Activated CD8-positive, alpha-beta memory T cell treated with anti-CD3 and anti-CD28 coated beads, Interleukin-2, amount 10 ng/mL, durations not matched to agents 7 days and 5 days (primary cell): ENCODE measurements at regions of chr17 and their contacts with region 1.

Region 1: GRCh38 chr17:75749545-75750389 is 15.2 kb downstream of the GALK1 start:
- DNase-seq: peak; percentile 89
- ATAC-seq: peak; percentile 73
- H3K4me3 Mint-ChIP-seq: no peak overlapping the region
- H3K27ac Mint-ChIP-seq: no peak overlapping the region
- H3K4me1 Mint-ChIP-seq: peaks cover 18% of the 10 kb centered on the region
- H3K27me3 Mint-ChIP-seq: peaks cover 6% of the 10 kb centered on the region

Region 2: DNA sequence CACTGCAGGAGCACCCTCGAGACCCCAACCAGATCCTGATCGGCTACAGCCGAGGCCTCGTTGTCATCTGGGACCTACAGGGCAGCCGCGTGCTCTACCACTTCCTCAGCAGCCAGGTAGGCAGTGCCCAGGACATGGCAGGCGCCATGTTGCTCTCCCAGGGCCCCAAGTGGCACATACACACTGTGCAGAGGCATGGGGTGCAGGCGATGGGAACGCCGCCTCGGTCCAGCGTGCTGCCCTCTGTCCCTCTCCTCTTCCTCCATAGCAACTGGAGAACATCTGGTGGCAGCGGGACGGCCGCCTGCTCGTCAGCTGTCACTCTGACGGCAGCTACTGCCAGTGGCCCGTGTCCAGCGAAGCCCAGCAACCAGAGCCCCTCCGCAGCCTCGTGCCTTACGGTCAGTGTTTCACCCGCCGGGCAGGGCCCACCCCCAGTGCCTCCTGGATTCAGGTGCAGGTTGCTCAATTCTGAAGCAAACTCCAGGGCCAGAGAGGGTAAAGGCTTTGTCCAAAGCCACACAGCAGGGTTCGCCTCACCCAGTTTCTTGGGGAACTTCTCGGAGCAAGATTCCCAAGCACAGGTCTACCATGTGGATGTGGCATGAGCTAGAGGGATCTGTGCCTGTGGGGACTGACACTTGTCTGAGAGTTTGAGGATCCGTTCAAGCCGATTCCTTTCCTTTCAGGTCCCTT is 186.6 kb before region 1 on chr17:
- CTCF ChIA-PET with region 1: no interaction called
- DNase-seq: no peak
- ATAC-seq: no peak
- H3K4me3 Mint-ChIP-seq: no peak overlapping the region
- H3K27ac Mint-ChIP-seq: no peak overlapping the region
- H3K4me1 Mint-ChIP-seq: no peaks in the 10 kb centered on the region
- H3K27me3 Mint-ChIP-seq: no peaks in the 10 kb centered on the region

Region 3: DNA sequence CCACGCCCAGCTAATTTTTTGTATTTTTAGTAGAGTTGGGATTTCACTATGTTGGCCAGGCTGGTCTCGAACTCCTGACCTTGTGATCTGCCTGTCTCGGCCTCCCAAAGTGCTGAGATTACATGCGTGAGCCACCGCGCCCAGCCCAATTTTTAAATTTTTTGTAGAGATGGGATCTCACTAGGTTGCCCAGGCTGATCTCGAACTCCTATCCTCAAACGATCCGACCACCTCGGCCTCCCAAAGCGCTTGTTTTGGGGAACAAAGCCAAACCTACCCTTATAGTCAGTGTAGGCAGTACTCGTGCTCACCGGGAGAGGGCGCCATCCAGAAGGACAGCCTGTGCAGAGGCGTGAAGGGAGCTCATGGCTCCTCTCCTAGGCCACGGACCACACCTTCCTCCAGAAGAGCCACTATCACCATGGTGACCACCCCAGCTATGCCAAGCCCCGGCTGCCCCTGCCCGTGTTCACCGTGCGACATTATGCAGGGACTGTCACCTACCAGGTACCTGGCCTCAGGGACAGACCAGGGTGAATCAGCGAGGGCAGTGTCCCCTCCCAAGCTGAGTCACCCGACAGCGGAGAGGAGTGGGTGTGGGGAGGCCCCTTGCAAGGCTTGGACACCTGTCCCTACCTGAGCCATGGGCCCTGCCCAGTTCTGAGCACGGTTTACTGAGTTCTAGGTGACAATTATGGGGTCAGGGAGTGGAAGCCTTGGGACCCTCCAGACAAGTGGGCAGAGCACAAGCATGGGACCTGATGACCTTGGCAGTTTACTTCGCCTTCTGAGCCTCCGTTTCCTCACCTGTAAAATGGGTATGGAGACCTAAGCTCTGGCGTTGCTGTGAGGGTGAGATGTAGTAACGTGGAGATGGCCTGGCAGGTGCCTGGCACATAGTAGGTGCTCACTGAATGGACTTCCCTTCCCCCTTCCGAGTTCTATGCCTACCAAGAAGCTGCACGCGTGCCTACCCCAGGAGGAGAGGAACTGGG is 148.4 kb before region 1 on chr17:
- CTCF ChIA-PET with region 1: interaction called, 73 read pairs
- DNase-seq: peak; percentile 79
- ATAC-seq: peak; percentile 83
- H3K4me3 Mint-ChIP-seq: no peak overlapping the region
- H3K27ac Mint-ChIP-seq: no peak overlapping the region
- H3K4me1 Mint-ChIP-seq: no peaks in the 10 kb centered on the region
- H3K27me3 Mint-ChIP-seq: no peaks in the 10 kb centered on the region

Region 4: GRCh38 chr17:75645889-75646637 is 103.7 kb before region 1 on chr17:
- CTCF ChIA-PET with region 1: interaction called, 22 read pairs
- DNase-seq: peak; percentile 57
- ATAC-seq: peak; percentile 92
- H3K4me3 Mint-ChIP-seq: no peak overlapping the region
- H3K27ac Mint-ChIP-seq: peak overlapping the region; percentile 86
- H3K4me1 Mint-ChIP-seq: peaks cover 21% of the 10 kb centered on the region
- H3K27me3 Mint-ChIP-seq: no peaks in the 10 kb centered on the region

Region 5: DNA sequence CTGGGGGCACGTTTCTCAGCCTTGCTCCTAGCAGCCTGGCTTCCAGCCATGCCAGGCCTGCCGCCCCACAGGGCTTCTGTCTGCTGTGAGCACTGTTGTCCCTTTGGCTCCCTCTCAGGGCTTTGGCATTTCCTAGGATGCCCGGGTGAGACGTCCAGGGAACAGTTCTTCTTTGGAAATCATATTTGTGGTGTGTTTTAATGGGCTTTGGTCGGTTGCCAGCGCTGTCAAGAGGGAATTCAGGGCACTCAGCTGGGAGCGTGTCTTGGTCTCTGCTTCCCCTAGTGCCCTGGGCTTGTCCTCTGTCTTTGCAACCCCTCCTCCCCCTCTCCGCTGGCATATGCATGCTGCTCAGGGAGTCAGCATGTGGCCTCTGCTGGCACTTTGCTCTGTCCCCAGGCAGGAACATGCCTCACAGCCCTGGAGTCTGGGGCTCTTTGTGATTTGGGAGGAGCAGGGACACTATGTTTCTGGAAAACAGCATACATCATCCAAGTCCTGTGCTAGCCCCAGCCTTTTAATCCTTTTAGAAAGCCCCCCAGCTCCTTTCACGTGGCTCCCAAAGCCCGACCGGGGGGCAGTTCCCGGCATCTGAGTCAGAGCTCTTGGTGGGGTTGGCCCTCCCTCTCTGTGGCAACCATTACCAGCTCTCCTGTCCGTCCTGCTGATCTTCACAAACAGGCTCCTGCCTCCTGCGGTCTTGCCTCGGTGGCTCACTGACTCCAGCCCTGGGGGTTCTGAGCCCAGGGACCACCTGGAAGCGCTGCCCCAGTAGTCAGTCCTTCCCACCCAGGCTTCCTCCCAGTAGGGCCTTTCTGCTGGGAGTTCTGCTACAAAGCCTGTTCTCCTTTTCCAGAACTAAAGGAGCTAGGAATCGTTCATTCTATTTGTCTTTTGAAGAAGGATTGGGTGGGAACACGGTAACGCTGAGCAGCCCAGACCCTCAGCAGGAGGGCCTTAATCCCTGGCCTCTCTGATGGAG is 56.0 kb before region 1 on chr17:
- CTCF ChIA-PET with region 1: interaction called, 428 read pairs
- DNase-seq: no peak
- ATAC-seq: no peak
- H3K4me3 Mint-ChIP-seq: no peak overlapping the region
- H3K27ac Mint-ChIP-seq: no peak overlapping the region
- H3K4me1 Mint-ChIP-seq: peaks cover 27% of the 10 kb centered on the region
- H3K27me3 Mint-ChIP-seq: no peaks in the 10 kb centered on the region

Region 6: DNA sequence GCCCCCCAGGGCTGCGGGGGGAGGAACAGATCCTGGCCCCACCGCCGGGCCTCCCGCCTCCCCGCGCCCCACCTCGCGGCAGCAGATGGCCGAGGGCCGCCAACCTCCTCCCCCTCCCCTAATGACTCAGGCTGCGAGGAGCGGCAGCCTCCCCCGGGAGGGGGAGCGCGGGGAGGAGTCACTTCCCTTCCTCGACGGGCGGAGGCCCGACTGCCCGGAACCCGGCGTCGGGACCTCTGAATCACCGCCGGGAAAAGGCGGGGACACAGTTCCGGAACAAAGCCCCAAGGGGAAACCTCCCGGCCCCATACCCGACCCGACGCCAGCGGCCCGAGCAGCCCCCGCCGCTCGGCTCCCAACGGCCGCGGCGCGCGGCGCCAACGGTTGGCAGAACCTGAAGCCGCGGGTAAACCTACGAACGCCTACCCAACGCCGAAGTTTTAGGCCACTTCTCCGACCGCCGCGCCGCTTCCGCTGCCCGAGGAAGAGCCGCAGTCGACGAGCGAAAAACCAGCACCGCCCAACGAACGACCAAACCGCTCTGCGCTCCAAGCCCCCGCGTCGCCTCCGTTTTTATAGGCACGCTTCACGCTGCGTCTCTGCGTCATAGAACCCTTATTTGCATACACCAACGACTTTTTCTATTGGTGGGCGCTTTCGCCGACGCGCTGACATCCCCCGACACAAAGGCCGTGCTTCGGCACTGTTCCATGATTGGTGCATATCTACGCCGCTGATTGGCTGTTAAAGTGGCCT is 29.6 kb after region 1 on chr17:
- CTCF ChIA-PET with region 1: interaction called, 25 read pairs
- DNase-seq: peak; percentile 98
- ATAC-seq: peak; percentile 74
- H3K4me3 Mint-ChIP-seq: peak overlapping the region; percentile 86
- H3K27ac Mint-ChIP-seq: peak overlapping the region; percentile 99
- H3K4me1 Mint-ChIP-seq: peaks cover 51% of the 10 kb centered on the region
- H3K27me3 Mint-ChIP-seq: peaks cover 2% of the 10 kb centered on the region

Region 7: DNA sequence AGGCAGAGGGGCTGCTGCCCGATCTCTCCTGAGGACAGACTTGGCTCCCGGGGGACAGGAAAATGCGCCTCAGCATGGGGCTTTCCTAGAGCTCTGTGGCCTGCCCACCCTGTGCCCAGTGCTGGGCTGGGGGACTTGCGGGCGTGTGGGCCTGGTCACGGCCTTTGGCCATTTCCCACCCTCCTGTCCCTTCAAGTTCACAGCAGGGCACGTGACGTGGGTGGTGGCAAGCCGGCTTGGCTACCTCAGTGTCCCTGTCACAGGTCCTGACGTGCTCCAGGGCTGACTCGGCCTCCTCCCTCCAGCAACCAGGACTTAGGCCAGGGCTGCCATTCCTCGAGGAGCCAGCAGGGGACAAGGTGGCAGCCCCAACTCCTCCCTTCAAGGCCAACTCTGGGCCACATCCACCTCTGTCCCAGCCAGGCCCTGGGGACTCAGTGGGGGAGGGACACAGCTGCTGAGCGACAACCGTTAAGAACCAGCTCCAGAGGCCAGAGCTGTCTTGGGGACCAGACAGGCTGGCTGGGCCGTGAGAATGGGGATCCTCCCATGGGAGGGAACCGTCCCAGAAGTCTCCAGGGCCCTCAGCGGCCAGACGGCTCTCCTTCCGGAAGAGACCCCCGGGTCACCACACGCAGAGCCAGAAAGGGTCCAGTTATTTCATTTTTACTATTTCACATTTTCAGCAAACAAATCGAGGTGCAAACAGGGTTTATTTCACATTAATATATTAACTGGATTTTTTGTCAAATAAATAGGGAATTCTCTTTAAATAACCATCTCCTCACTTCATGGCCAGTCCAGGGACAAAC is 95.5 kb after region 1 on chr17:
- CTCF ChIA-PET with region 1: interaction called, 33 read pairs
- DNase-seq: peak; percentile 79
- ATAC-seq: peak; percentile 52
- H3K4me3 Mint-ChIP-seq: peak overlapping the region; percentile 39
- H3K27ac Mint-ChIP-seq: peak overlapping the region; percentile 61
- H3K4me1 Mint-ChIP-seq: peaks cover 27% of the 10 kb centered on the region
- H3K27me3 Mint-ChIP-seq: no peaks in the 10 kb centered on the region

Region 8: GRCh38 chr17:75950821-75951554 is 201.2 kb after region 1 on chr17:
- CTCF ChIA-PET with region 1: no interaction called
- DNase-seq: no peak
- ATAC-seq: peak; percentile 68
- H3K4me3 Mint-ChIP-seq: no peak overlapping the region
- H3K27ac Mint-ChIP-seq: peak overlapping the region; percentile 70
- H3K4me1 Mint-ChIP-seq: peaks cover 18% of the 10 kb centered on the region
- H3K27me3 Mint-ChIP-seq: no peaks in the 10 kb centered on the region